Endothelial cell of umbilical vein (primary cell): ENCODE measurements at regions of chr13 and their contacts with region 1.

Region 1: GRCh38 chr13:101144808-101145419 is 271.4 kb downstream of the NALCN start:
- DNase-seq: peak; percentile 66
- H3K4me3 ChIP-seq: no peak overlapping the region
- H3K27ac ChIP-seq: no peak overlapping the region
- H3K4me1 ChIP-seq: peaks cover 12% of the 10 kb centered on the region
- H3K27me3 ChIP-seq: no peaks in the 10 kb centered on the region
- CTCF ChIP-seq: peak; percentile 36 to 42
- POLR2A ChIP-seq: no peak

Region 2: GRCh38 chr13:100301418-100301817 is 843.5 kb before region 1 on chr13:
- CTCF ChIA-PET with region 1: no interaction called
- POLR2A ChIA-PET with region 1: no interaction called
- dilution Hi-C with region 1: no loop called
- intact Hi-C with region 1: no loop called
- DNase-seq: no peak
- H3K4me3 ChIP-seq: no peak overlapping the region
- H3K27ac ChIP-seq: no peak overlapping the region
- H3K4me1 ChIP-seq: peaks cover 7% of the 10 kb centered on the region
- H3K27me3 ChIP-seq: no peaks in the 10 kb centered on the region
- CTCF ChIP-seq: no peak
- POLR2A ChIP-seq: no peak

Region 3: GRCh38 chr13:101155920-101156319 is 11.0 kb after region 1 on chr13:
- CTCF ChIA-PET with region 1: interaction called, 25 read pairs
- POLR2A ChIA-PET with region 1: no interaction called
- dilution Hi-C with region 1: no loop called
- intact Hi-C with region 1: no loop called
- DNase-seq: no peak
- H3K4me3 ChIP-seq: no peak overlapping the region
- H3K27ac ChIP-seq: no peak overlapping the region
- H3K4me1 ChIP-seq: no peaks in the 10 kb centered on the region
- H3K27me3 ChIP-seq: no peaks in the 10 kb centered on the region
- CTCF ChIP-seq: peak; percentile 35 to 40
- POLR2A ChIP-seq: no peak

Region 4: DNA sequence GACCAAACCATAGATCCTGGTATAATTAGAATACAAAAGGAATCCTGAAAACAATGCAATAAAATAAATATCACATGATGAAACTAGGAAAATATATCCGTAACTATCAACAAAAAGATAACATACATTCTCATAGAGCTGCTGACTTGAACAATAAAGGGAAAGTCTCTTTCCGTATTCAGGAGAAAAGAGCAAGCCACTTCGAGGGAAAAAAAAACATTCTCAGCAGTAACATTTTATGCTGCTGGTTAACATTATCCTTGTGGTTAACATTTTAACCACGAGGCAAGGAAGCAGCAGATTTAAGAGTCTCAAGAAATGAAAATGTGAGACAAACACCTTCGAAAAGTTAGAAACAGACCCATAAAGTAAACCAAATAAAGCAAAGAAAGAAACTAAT is 245.5 kb after region 1 on chr13:
- CTCF ChIA-PET with region 1: interaction called, 3 read pairs
- POLR2A ChIA-PET with region 1: no interaction called
- dilution Hi-C with region 1: no loop called
- intact Hi-C with region 1: loop called (anchors 2 kb)
- DNase-seq: peak; percentile 81
- H3K4me3 ChIP-seq: peak overlapping the region in 1 of 3 experiments; percentile 1
- H3K27ac ChIP-seq: peak overlapping the region; percentile 68
- H3K4me1 ChIP-seq: peaks cover 10% of the 10 kb centered on the region
- H3K27me3 ChIP-seq: no peaks in the 10 kb centered on the region
- CTCF ChIP-seq: no peak
- POLR2A ChIP-seq: no peak

Region 5: GRCh38 chr13:101474419-101474957 is 329.6 kb after region 1 on chr13:
- CTCF ChIA-PET with region 1: interaction called, 119 read pairs
- POLR2A ChIA-PET with region 1: no interaction called
- dilution Hi-C with region 1: no loop called
- intact Hi-C with region 1: loop called (anchors 1 kb)
- DNase-seq: peak; percentile 80
- H3K4me3 ChIP-seq: no peak overlapping the region
- H3K27ac ChIP-seq: no peak overlapping the region
- H3K4me1 ChIP-seq: peaks cover 9% of the 10 kb centered on the region
- H3K27me3 ChIP-seq: no peaks in the 10 kb centered on the region
- CTCF ChIP-seq: peak; percentile 40 to 44
- POLR2A ChIP-seq: no peak

Region 6: GRCh38 chr13:101545521-101545920 is 400.6 kb after region 1 on chr13:
- CTCF ChIA-PET with region 1: interaction called, 13 read pairs
- POLR2A ChIA-PET with region 1: no interaction called
- dilution Hi-C with region 1: no loop called
- intact Hi-C with region 1: no loop called
- DNase-seq: no peak
- H3K4me3 ChIP-seq: no peak overlapping the region
- H3K27ac ChIP-seq: no peak overlapping the region
- H3K4me1 ChIP-seq: no peaks in the 10 kb centered on the region
- H3K27me3 ChIP-seq: no peaks in the 10 kb centered on the region
- CTCF ChIP-seq: no peak
- POLR2A ChIP-seq: no peak

Region 7: GRCh38 chr13:101916108-101916757 is 771.3 kb after region 1 on chr13:
- CTCF ChIA-PET with region 1: interaction called, 18 read pairs
- POLR2A ChIA-PET with region 1: no interaction called
- dilution Hi-C with region 1: no loop called
- intact Hi-C with region 1: loop called (anchors 2 kb)
- DNase-seq: no peak
- H3K4me3 ChIP-seq: peak overlapping the region in 1 of 3 experiments; percentile 2
- H3K27ac ChIP-seq: no peak overlapping the region
- H3K4me1 ChIP-seq: no peaks in the 10 kb centered on the region
- H3K27me3 ChIP-seq: peaks cover 33 to 64% of the 10 kb centered on the region in 2 experiments
- CTCF ChIP-seq: peak in 1 of 2 donors; percentile 34
- POLR2A ChIP-seq: no peak

Region 8: GRCh38 chr13:102460801-102461200 is 1315.9 kb after region 1 on chr13:
- CTCF ChIA-PET with region 1: no interaction called
- POLR2A ChIA-PET with region 1: no interaction called
- dilution Hi-C with region 1: no loop called
- intact Hi-C with region 1: loop called (anchors 1 kb)
- DNase-seq: no peak
- H3K4me3 ChIP-seq: no peak overlapping the region
- H3K27ac ChIP-seq: no peak overlapping the region
- H3K4me1 ChIP-seq: no peaks in the 10 kb centered on the region
- H3K27me3 ChIP-seq: no peaks in the 10 kb centered on the region
- CTCF ChIP-seq: no peak
- POLR2A ChIP-seq: no peak